ENCODE measurements at regions of chr17 and their contacts with region 1.

Region 1: GRCh38 chr17:58577642-58578091 is 63.2 kb upstream of the MTMR4 start:
- DNase-seq: peak; percentile 36
- ATAC-seq: peak; percentile 48; the same call in 1 of the 2 replicates
- H3K4me3 ChIP-seq: no peak overlapping the region
- H3K27ac ChIP-seq: no peak overlapping the region
- H3K4me1 ChIP-seq: 0 out of 2 replicates have a peak, but pooled peaks cover 2% of the 10 kb centered on the region
- H3K27me3 ChIP-seq: peaks cover 4% of the 10 kb centered on the region
- CTCF ChIP-seq: peak; percentile 52
- POLR2A ChIP-seq: no peak
- RAD21 ChIP-seq: no peak

Region 2: GRCh38 chr17:58902322-58902721 is 324.7 kb after region 1 on chr17:
- CTCF ChIA-PET with region 1: interaction called, 10 read pairs
- POLR2A ChIA-PET with region 1: no interaction called
- dilution Hi-C with region 1: no loop called
- in situ Hi-C with region 1: no loop called
- intact Hi-C with region 1: no loop called
- DNase-seq: no peak
- ATAC-seq: no peak
- H3K4me3 ChIP-seq: no peak overlapping the region
- H3K27ac ChIP-seq: no peak overlapping the region
- H3K4me1 ChIP-seq: no peaks in the 10 kb centered on the region
- H3K27me3 ChIP-seq: no peaks in the 10 kb centered on the region
- CTCF ChIP-seq: no peak
- POLR2A ChIP-seq: no peak
- RAD21 ChIP-seq: no peak

Region 3: DNA sequence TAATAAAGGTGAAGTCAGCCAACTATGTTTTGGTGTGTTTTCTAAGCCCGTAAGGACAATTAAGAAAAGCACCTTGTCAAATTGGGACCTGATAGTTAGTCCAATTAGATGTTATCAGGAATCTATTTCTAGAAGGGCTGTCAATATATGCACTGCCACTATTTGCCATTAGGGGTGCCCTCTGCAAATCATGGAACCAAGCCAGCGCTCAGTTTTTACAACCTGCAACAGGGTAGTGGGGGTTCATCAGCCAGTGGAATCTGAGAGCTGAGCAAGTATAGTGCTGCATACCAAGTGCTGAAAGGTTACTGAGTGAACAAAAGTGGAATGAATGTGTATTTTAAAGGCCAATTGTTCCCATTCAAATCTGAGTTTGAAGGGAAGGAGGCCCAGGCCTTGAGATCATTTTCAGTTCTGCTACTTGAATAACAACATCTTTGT is 588.3 kb after region 1 on chr17:
- CTCF ChIA-PET with region 1: no interaction called
- POLR2A ChIA-PET with region 1: no interaction called
- dilution Hi-C with region 1: no loop called
- in situ Hi-C with region 1: no loop called
- intact Hi-C with region 1: no loop called
- DNase-seq: peak; percentile 60
- ATAC-seq: peak; percentile 65
- H3K4me3 ChIP-seq: no peak overlapping the region
- H3K27ac ChIP-seq: no peak overlapping the region
- H3K4me1 ChIP-seq: peaks cover 3% of the 10 kb centered on the region
- H3K27me3 ChIP-seq: no peaks in the 10 kb centered on the region
- CTCF ChIP-seq: peak; percentile 55
- POLR2A ChIP-seq: no peak
- RAD21 ChIP-seq: peak; percentile 22; the same call in 1 of the 2 replicates